ENCODE measurements at regions of chr7 and their contacts with region 1.

Region 1: GRCh38 chr7:146090023-146090645 is 26.5 kb upstream of the CNTNAP2 start:
- DNase-seq: no peak
- ATAC-seq: no peak
- H3K4me3 ChIP-seq: no peak overlapping the region
- H3K27ac ChIP-seq: no peak overlapping the region
- H3K4me1 ChIP-seq: no peaks in the 10 kb centered on the region
- H3K27me3 ChIP-seq: no peaks in the 10 kb centered on the region
- CTCF ChIP-seq: peak; percentile 29 to 68 (median 62)
- POLR2A ChIP-seq: no peak

Region 2: DNA sequence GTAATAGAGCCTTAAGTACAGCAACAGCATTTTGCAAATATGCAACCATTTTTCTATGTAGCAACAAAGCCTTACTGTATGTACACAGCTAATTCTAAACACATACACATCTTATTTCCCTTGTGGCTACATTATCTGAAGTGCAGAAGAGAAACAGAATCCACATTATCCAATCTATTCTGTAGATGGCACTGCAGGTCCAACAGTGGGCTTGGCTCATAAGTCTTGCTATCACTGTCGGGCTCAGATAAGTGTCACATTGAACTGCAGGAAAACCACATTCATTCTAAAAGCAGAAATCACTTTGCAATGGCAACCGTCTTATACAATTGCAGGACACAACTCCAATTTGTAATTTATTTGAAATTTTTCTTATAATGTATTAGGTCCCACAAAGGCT is 1576.8 kb before region 1 on chr7:
- intact Hi-C with region 1: loop called in 1 of 10 experiments (anchors 5 kb)
- DNase-seq: no peak
- ATAC-seq: peak in 2 of 4 donors; percentile 77 to 79
- H3K4me3 ChIP-seq: no peak overlapping the region
- H3K27ac ChIP-seq: no peak overlapping the region
- H3K4me1 ChIP-seq: peaks cover 0 to 13% (median 5%) of the 10 kb centered on the region in 12 donors
- H3K27me3 ChIP-seq: no peaks in the 10 kb centered on the region
- CTCF ChIP-seq: peak in 11 of 12 donors; percentile 7 to 58 (median 48)
- POLR2A ChIP-seq: no peak

Region 3: GRCh38 chr7:144854839-144855424 is 1235.2 kb before region 1 on chr7:
- intact Hi-C with region 1: loop called in 2 of 10 experiments (anchors 10 kb)
- DNase-seq: no peak
- ATAC-seq: no peak
- H3K4me3 ChIP-seq: no peak overlapping the region
- H3K27ac ChIP-seq: no peak overlapping the region
- H3K4me1 ChIP-seq: no peaks in the 10 kb centered on the region
- H3K27me3 ChIP-seq: peaks cover 0 to 10% (median 0%) of the 10 kb centered on the region in 9 donors
- CTCF ChIP-seq: peak; percentile 37 to 67 (median 48)
- POLR2A ChIP-seq: no peak

Region 4: GRCh38 chr7:145036604-145037405 is 1053.3 kb before region 1 on chr7:
- intact Hi-C with region 1: loop called in 6 of 10 experiments (anchors 5 to 10 kb)
- DNase-seq: no peak
- ATAC-seq: no peak
- H3K4me3 ChIP-seq: no peak overlapping the region
- H3K27ac ChIP-seq: no peak overlapping the region
- H3K4me1 ChIP-seq: no peaks in the 10 kb centered on the region
- H3K27me3 ChIP-seq: no peaks in the 10 kb centered on the region
- CTCF ChIP-seq: peak; percentile 53 to 84 (median 72)
- POLR2A ChIP-seq: no peak

Region 5: DNA sequence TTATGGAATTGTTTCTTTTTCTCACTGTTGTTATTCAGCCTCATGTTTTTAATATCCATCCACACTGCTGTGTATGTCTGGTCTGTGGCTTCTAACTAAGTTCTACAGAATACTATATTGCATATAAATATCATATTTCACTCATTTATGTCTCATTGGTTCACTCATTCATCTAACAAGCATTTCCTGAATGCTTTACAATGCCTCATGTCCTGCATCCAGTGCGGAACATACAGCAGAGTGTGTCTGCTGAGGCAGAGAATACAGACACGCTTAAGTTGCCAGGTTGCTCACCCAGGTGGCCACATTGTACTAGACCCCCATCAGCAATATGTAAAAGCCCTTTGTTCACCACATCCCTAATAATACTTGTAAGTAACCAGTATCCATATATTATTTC is 85.3 kb before region 1 on chr7:
- intact Hi-C with region 1: no loop called
- DNase-seq: no peak
- ATAC-seq: no peak
- H3K4me3 ChIP-seq: no peak overlapping the region
- H3K27ac ChIP-seq: no peak overlapping the region
- H3K4me1 ChIP-seq: no peaks in the 10 kb centered on the region
- H3K27me3 ChIP-seq: no peaks in the 10 kb centered on the region
- CTCF ChIP-seq: no peak
- POLR2A ChIP-seq: no peak

Region 6: DNA sequence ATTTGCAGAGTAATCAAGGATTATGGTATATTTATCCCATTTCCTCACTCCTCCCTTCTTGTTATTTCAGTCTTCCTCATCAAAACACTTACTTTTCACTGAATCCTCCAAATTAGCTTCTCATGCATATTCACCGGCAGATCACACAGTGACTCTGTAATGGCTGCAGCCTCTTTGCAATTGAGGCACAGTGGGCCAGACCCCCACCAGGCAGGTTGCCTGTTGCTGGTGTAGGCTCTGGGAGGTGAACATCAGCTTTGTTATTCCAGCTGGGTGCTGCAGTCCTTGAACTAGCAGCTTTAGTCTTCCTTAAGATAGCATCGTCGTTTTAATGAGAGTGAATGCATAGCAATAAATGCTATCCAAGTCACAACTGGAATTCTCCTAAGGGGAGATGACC is 475.7 kb after region 1 on chr7:
- intact Hi-C with region 1: no loop called
- DNase-seq: no peak
- ATAC-seq: no peak
- H3K4me3 ChIP-seq: no peak overlapping the region
- H3K27ac ChIP-seq: no peak overlapping the region
- H3K4me1 ChIP-seq: no peaks in the 10 kb centered on the region
- H3K27me3 ChIP-seq: no peaks in the 10 kb centered on the region
- CTCF ChIP-seq: no peak
- POLR2A ChIP-seq: no peak

Region 7: GRCh38 chr7:146772601-146773000 is 682.5 kb after region 1 on chr7:
- intact Hi-C with region 1: no loop called
- DNase-seq: no peak
- ATAC-seq: no peak
- H3K4me3 ChIP-seq: no peak overlapping the region
- H3K27ac ChIP-seq: no peak overlapping the region
- H3K4me1 ChIP-seq: no peaks in the 10 kb centered on the region
- H3K27me3 ChIP-seq: no peaks in the 10 kb centered on the region
- CTCF ChIP-seq: peak in 1 of 12 donors; percentile 11
- POLR2A ChIP-seq: no peak

Measured in heart left ventricle (tissue), 16 donors.